Activated T-helper 1 cell treated with anti-CD3 and anti-CD28 coated beads, Interleukin-12 subunit alpha, Interleukin-12 subunit beta, Interleukin-2, Interleukin-4 antibody, amounts not matched to agents 30 ng/mL and 10 ng/mL and 1 ng/mL, durations not matched to agents 14 hours and 24 hours and 36 hours (primary cell): ENCODE measurements at regions of chr3 and their contacts with region 1.

Region 1: DNA sequence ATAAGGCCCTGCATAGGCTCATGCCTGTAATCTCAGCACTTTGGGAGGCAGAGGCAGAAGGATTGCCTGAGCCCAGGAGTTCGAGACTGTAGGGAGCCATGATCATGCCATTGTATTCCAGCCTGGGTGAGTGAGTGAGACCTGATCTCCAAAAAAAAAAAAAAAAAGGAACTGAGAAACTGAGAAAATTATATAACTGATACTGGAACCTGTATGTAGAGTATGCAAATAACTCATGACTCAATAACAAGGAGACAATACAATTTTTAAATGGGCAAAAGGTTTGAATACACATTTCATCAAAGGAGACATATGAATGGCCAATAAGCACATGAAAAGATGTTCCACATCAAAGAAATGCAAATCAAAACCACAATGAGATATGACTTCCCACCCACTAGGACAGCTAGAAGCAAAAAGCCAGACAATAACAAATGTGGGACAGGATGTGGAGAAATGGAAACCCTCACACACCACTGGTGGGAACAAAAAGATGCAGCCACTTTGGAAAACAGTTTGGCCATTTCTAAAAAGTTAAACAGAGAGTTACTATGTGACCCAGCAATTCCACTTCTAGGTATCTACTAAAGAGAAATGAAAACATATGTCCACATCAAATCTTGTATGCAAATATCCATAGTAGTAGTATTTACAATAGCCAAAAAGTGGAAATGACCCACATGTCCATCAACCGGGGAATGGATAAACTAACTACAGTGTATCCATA is 70.7 kb downstream of the IQSEC1 start:
- DNase-seq: no peak
- H3K4me3 Mint-ChIP-seq: peak overlapping the region; percentile 30
- H3K27ac Mint-ChIP-seq: peak overlapping the region; percentile 33
- H3K4me1 Mint-ChIP-seq: peaks cover 58% of the 10 kb centered on the region
- H3K27me3 Mint-ChIP-seq: no peaks in the 10 kb centered on the region

Region 2: GRCh38 chr3:13073326-13074005 is 70.9 kb after region 1 on chr3 and contains the start of gene IQSEC1:
- intact Hi-C with region 1: loop called (anchors 2 kb)
- DNase-seq: peak; percentile 71
- H3K4me3 Mint-ChIP-seq: peak within 1 kb of the TSS; percentile 84
- H3K27ac Mint-ChIP-seq: peak within 1 kb of the TSS; percentile 68
- H3K4me1 Mint-ChIP-seq: peaks cover 28% of the 10 kb centered on the region
- H3K27me3 Mint-ChIP-seq: peaks cover 33% of the 10 kb centered on the region
- total RNA-seq, gene IQSEC1: 24.9 and 31.4 TPM in 2 replicates